ENCODE measurements at regions of chr18 and their contacts with region 1.

Region 1: DNA sequence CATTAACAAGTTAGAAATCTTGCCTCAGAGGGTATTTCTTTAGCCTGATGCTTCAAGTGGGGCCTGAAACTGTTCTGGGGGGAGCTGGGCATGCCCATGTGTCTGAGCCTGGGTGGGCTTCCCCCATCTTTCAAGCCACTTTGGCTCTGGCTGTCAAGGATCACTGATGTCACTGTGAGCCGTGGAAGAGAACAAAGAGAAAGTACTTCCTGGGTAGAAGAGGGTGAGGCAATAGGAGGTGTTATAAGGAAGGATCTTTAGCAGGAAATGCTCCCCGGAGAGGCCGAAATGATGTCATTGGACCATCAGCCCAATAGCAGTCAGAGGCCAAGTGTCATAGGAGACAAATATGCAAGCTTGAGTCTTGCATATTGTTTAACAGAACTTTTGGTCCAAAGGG is 228.4 kb upstream of the MEX3C start:
- DNase-seq: peak; percentile 38
- H3K4me3 ChIP-seq: no peak overlapping the region
- H3K27ac ChIP-seq: no peak overlapping the region
- H3K4me1 ChIP-seq: no peaks in the 10 kb centered on the region
- H3K27me3 ChIP-seq: no peaks in the 10 kb centered on the region
- CTCF ChIP-seq: no peak

Region 2: DNA sequence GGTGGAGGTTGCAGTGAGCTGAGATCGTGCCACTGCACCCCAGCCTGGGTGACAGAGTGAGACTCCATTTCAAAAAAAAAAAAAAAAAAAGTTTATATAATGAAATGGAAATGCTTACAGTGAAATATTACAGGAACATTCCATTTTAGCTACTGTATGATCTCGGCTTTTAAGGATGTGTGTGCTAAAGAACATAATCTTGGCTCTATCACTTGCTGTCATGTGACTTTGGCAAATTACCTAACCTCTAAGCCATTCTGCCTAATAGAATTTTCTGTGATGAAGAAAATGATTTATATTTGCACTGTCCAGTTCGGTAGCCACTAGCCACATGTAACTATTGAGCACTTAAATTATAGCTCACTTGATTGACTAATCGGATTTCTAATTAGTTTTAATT is 359.6 kb before region 1 on chr18:
- CTCF ChIA-PET with region 1: no interaction called
- POLR2A ChIA-PET with region 1: no interaction called
- intact Hi-C with region 1: no loop called
- DNase-seq: no peak
- H3K4me3 ChIP-seq: no peak overlapping the region
- H3K27ac ChIP-seq: no peak overlapping the region
- H3K4me1 ChIP-seq: no peaks in the 10 kb centered on the region
- H3K27me3 ChIP-seq: no peaks in the 10 kb centered on the region
- CTCF ChIP-seq: no peak

Region 3: GRCh38 chr18:51370996-51371395 is 54.9 kb before region 1 on chr18:
- CTCF ChIA-PET with region 1: no interaction called
- POLR2A ChIA-PET with region 1: no interaction called
- intact Hi-C with region 1: no loop called
- DNase-seq: no peak
- H3K4me3 ChIP-seq: no peak overlapping the region
- H3K27ac ChIP-seq: no peak overlapping the region
- H3K4me1 ChIP-seq: no peaks in the 10 kb centered on the region
- H3K27me3 ChIP-seq: no peaks in the 10 kb centered on the region
- CTCF ChIP-seq: no peak

Region 4: DNA sequence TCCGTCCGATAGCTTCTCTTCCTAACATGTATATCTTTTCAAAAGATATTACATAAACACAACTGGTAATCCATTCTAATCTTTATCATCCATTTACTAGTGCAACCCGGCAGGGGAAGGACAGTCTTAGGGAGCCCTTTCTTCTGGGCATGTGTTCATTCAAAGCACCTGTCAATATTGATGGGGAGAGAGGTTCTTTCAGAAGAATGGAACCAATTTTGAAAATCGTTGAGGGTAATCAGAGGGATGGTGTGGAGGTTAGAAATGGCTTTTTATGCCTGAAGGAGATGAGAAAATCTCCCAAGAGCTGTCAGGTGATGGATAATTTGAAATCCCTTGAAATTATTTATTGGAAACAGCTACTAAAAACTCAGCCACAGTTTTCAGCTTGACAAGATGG is 352.2 kb after region 1 on chr18:
- CTCF ChIA-PET with region 1: interaction called, 11 read pairs
- POLR2A ChIA-PET with region 1: no interaction called
- intact Hi-C with region 1: no loop called
- DNase-seq: no peak
- H3K4me3 ChIP-seq: no peak overlapping the region
- H3K27ac ChIP-seq: no peak overlapping the region
- H3K4me1 ChIP-seq: no peaks in the 10 kb centered on the region
- H3K27me3 ChIP-seq: peaks cover 5% of the 10 kb centered on the region
- CTCF ChIP-seq: no peak